CD4-positive, alpha-beta T cell (primary cell): ENCODE measurements at regions of chrX and their contacts with region 1.

Region 1: DNA sequence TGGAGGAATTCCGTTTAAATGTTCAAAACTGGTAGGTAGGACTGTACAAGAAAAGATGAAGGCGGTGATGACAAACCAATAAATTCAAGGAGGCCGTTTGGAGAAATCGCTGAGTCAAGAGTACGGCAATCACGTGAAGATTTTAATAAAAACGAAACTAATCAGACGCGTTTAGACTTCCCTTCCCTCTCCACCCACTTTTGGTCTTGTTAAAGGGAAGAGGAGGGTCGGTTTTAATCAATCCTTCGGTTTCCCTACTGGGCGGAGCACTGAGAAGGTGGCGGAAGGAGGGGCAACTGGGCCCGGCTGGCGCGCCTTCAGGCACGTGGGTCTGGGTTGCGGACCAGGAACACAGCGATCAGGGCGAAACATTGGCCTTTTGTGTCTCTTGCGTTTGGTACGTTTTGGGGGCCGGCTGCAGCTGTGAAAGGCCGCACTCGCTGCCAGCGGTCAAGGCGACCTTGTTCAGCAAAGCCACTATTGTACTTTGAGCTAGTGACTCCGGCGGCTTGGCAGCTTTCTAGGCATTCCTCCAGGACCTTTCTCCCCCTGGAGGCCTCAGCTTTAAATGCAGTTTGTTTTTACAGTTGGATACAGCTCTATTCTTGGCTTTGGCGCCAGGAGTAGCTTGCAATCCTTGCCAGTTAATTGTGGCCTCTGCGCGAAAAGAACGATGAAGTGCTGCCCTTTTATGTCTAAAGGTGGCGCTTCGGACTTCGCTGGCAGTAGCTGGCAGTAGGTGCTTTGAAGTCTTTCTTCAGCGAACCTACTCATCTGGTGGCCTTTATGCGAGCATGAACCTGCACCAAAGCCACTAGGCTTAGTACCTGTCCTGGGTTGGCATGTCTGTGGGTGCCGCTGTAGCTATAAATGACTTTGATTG is 16.8 kb upstream of the LAMP2 start:
- DNase-seq: peak; percentile 12 to 80 (median 28)
- ATAC-seq: peak; percentile 81
- H3K4me3 ChIP-seq: peak overlapping the region; percentile 76
- H3K4me3 Mint-ChIP-seq: peak overlapping the region; percentile 98
- H3K27ac ChIP-seq: peak overlapping the region; percentile 41 to 74
- H3K27ac Mint-ChIP-seq: peak overlapping the region; percentile 97
- H3K4me1 ChIP-seq: peaks cover 19% of the 10 kb centered on the region
- H3K4me1 Mint-ChIP-seq: peaks cover 26% of the 10 kb centered on the region
- H3K27me3 ChIP-seq: no peaks in the 10 kb centered on the region
- H3K27me3 Mint-ChIP-seq: no peaks in the 10 kb centered on the region
- CTCF ChIP-seq: peak; percentile 52

Region 2: GRCh38 chrX:120457766-120458180 is 28.1 kb before region 1 on chrX:
- CTCF ChIA-PET with region 1: interaction called, 14 read pairs
- POLR2A ChIA-PET with region 1: interaction called, 3 read pairs
- intact Hi-C with region 1: no loop called
- DNase-seq: peak in 4 of 14 experiments; percentile 10 to 36 (median 25)
- ATAC-seq: peak; percentile 88
- H3K4me3 ChIP-seq: no peak overlapping the region
- H3K4me3 Mint-ChIP-seq: peak overlapping the region; percentile 70
- H3K27ac ChIP-seq: peak overlapping the region in 1 of 2 donors; percentile 34
- H3K27ac Mint-ChIP-seq: peak overlapping the region; percentile 65
- H3K4me1 ChIP-seq: peaks cover 7% of the 10 kb centered on the region
- H3K4me1 Mint-ChIP-seq: peaks cover 60% of the 10 kb centered on the region
- H3K27me3 ChIP-seq: no peaks in the 10 kb centered on the region
- H3K27me3 Mint-ChIP-seq: no peaks in the 10 kb centered on the region
- CTCF ChIP-seq: no peak

Region 3: GRCh38 chrX:120468825-120469525 is 16.9 kb before region 1 on chrX and contains the start of gene LAMP2:
- CTCF ChIA-PET with region 1: interaction called, 5 read pairs
- POLR2A ChIA-PET with region 1: interaction called, 8 read pairs
- intact Hi-C with region 1: loop called in 1 of 2 experiments (anchors 2 kb)
- DNase-seq: peak; percentile 61 to 90 (median 75)
- ATAC-seq: peak; percentile 96
- H3K4me3 ChIP-seq: peak within 1 kb of the TSS; percentile 82
- H3K4me3 Mint-ChIP-seq: peak within 1 kb of the TSS; percentile 93
- H3K27ac ChIP-seq: peak within 1 kb of the TSS; percentile 59 to 60
- H3K27ac Mint-ChIP-seq: peak within 1 kb of the TSS; percentile 88
- H3K4me1 ChIP-seq: peaks cover 20% of the 10 kb centered on the region
- H3K4me1 Mint-ChIP-seq: peaks cover 39% of the 10 kb centered on the region
- H3K27me3 ChIP-seq: no peaks in the 10 kb centered on the region
- H3K27me3 Mint-ChIP-seq: no peaks in the 10 kb centered on the region
- CTCF ChIP-seq: no peak
- total RNA-seq, gene LAMP2: 13.4 to 15.4 TPM

Region 4: DNA sequence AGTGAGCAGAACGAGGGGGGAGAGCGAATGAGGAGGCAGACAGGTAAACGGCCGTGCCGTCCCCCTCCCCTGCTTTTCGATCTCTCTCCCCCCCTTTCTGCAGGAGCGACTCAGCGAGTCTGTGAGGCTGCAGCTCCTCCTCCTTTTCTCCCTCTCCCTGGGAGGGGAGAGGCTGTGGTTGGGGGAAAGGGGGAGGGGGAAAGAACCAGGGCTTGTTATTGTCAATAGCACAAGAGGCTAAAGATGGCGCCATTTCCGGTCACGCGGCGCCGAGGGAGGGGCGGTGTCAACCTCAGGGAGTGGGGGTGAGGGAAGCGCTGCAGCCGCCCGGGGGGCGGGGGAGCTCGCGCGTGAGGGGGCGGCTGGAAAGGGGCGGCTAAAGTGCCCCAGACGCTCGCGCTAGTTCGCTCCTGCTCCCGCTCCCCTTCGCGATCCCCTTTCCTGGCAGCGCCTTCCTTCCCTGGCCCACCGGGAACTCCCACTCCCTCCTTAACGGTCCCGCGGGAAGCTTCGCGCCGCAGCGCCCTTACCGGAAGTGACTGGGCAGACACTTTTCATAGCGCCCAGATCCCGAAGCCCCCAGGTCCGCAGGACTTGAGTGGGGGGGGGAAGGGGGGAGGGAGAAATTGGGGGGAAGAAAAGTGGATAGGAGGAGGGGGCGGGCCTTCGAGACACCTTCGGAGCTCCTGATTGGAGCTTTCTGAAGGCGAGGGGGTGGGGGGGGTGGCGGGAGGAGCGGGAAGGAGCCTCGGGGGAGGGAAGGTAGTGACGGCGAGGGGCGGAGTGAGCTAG is 75.2 kb after region 1 on chrX and contains the start of gene CUL4B:
- CTCF ChIA-PET with region 1: interaction called, 6 read pairs
- POLR2A ChIA-PET with region 1: interaction called, 16 read pairs
- intact Hi-C with region 1: no loop called
- DNase-seq: peak; percentile 81 to 96 (median 88)
- ATAC-seq: peak; percentile 85
- H3K4me3 ChIP-seq: peak within 1 kb of the TSS; percentile 84
- H3K4me3 Mint-ChIP-seq: peak within 1 kb of the TSS; percentile 97
- H3K27ac ChIP-seq: peak within 1 kb of the TSS; percentile 95 to 97
- H3K27ac Mint-ChIP-seq: peak within 1 kb of the TSS; percentile 90
- H3K4me1 ChIP-seq: peaks cover 9% of the 10 kb centered on the region
- H3K4me1 Mint-ChIP-seq: peaks cover 32% of the 10 kb centered on the region
- H3K27me3 ChIP-seq: no peaks in the 10 kb centered on the region
- H3K27me3 Mint-ChIP-seq: no peaks in the 10 kb centered on the region
- CTCF ChIP-seq: no peak
- total RNA-seq, gene CUL4B: 32.1 to 34.1 TPM